HEK293 (cell line): ENCODE measurements at regions of chr9 and their contacts with region 1.

Region 1: GRCh38 chr9:35116898-35117551 is 1.4 kb upstream of the ATOSB start:
- H3K4me3 ChIP-seq: peak overlapping the region; percentile 48
- H3K27ac ChIP-seq: no peak overlapping the region
- H3K4me1 ChIP-seq: peaks cover 15% of the 10 kb centered on the region
- CTCF ChIP-seq: peak; percentile 79

Region 2: GRCh38 chr9:35079426-35080341 is 37.3 kb before region 1 on chr9 and contains the start of gene FANCG:
- CTCF ChIA-PET with region 1: no interaction called
- POLR2A ChIA-PET with region 1: interaction called, 16 read pairs
- H3K4me3 ChIP-seq: peak within 1 kb of the TSS; percentile 77
- H3K27ac ChIP-seq: peak within 1 kb of the TSS; percentile 84
- H3K4me1 ChIP-seq: no peaks in the 10 kb centered on the region
- CTCF ChIP-seq: peak; percentile 25; the same call in 1 of the 2 replicates

Region 3: GRCh38 chr9:35102926-35103659 is 13.9 kb before region 1 on chr9 and contains the start of gene STOML2:
- CTCF ChIA-PET with region 1: interaction called, 6 read pairs
- POLR2A ChIA-PET with region 1: interaction called, 92 read pairs
- H3K4me3 ChIP-seq: peak within 1 kb of the TSS; percentile 83
- H3K27ac ChIP-seq: peak within 1 kb of the TSS; percentile 66
- H3K4me1 ChIP-seq: no peaks in the 10 kb centered on the region
- CTCF ChIP-seq: no peak

Region 4: GRCh38 chr9:35258676-35259474 is 141.8 kb after region 1 on chr9:
- CTCF ChIA-PET with region 1: interaction called, 17 read pairs
- POLR2A ChIA-PET with region 1: interaction called, 8 read pairs
- H3K4me3 ChIP-seq: no peak overlapping the region
- H3K27ac ChIP-seq: no peak overlapping the region
- H3K4me1 ChIP-seq: no peaks in the 10 kb centered on the region
- CTCF ChIP-seq: 0 out of 2 replicates have a peak, but pooled peaks have one; percentile 25